ENCODE measurements at regions of chrX and their contacts with region 1.

Region 1: GRCh38 chrX:63754860-63755582 is 30.0 kb downstream of the ARHGEF9 start:
- DNase-seq: peak; percentile 95
- ATAC-seq: peak; percentile 98

Region 2: GRCh38 chrX:63713526-63713925 is 41.5 kb before region 1 on chrX:
- intact Hi-C with region 1: loop called (anchors 5 kb)
- DNase-seq: peak; percentile 43
- ATAC-seq: peak; percentile 95